Right ventricle myocardium inferior (tissue), 1 donor: ENCODE measurements at regions of chr9 and their contacts with region 1.

Region 1: DNA sequence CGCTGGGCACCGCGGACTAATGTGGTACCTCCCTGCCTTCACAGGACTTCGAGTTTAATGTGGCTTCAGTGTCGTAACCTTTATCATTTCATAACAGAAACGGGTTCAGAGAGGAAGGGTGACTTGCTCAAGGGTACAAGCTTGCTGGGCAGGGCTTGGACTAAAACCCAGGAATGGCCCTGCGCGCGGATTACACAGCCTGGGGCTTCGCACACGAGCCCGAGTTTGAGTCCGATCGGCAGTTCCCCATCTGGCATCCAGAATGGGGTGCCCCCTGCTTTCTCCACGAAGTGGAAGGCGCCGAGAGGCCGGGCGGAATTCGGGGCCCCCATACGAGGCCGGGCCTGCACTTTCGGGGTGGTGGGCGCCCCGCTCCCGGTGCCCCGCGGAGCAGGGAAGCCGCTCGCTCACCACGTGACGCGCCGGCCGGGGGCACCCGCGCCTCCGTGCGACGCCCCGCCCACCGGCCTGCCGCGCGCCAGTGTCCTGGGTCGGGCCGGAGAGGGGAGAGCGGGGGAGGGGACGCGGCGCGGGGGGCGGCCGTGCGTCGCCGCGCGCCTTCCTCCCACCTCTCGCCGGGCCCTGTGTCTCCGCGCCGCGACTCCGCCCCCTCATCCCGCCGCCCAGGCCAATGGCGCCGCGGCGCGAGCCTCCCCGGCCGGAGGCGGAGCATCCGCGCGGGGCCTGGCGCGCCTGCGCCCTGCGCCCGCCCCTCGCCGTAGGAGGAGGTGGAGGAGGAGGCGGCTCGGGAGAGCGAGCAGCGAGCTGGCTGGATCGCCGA is at the start of gene SET:
- DNase-seq: peak; percentile 98
- ATAC-seq: peak; percentile 97
- total RNA-seq, gene SET: 175 TPM

Region 2: DNA sequence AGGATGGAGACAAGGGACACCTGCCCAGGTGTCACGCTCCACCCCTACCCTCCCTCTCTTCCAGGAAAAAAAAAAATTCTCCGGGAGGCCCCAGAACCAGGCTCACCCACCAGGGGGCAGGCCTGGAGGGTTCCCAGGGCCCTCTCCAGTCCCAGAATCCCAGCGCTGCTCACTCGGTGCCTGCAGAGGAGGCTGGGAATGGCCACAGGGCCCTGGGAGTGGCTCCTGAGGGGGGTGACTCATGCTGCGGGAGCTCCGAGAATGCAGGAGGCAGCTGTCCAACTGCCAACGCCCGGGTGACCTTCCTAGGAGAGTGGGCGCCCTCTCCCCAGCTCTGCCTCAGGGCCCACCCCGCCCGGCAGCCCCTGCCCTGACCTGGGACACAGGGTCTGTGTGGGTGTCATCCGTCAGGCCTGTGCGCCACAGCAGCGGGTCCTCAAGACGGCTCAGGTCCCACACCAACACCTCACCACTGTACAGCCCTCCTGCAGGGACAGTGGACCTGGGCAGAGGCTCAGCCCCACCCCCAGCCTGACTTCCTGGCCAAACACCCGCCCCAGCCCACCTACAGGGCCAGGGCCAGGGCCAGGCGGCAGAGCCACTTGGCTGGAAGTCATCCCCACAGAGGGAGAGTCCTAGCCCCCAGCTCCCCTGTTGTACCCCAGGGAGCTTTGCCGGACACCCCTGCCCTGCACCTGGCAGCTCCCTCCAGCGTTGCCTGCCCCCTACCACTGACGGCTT is 53.2 kb before region 1 on chr9:
- intact Hi-C with region 1: loop called (anchors 2 kb)
- DNase-seq: peak; percentile 91
- ATAC-seq: peak; percentile 91

Region 3: GRCh38 chr9:128656416-128657343 is 32.0 kb before region 1 on chr9 and contains the start of gene DYNC2I2:
- intact Hi-C with region 1: loop called (anchors 2 kb)
- DNase-seq: peak; percentile 99
- ATAC-seq: peak; percentile 99
- total RNA-seq, gene DYNC2I2: 40.1 TPM